Right ventricle myocardium inferior (tissue), 1 donor: ENCODE measurements at regions of chr5 and their contacts with region 1.

Region 1: GRCh38 chr5:55936100-55936693 is 58.6 kb downstream of the IL6ST start:
- DNase-seq: peak; percentile 87
- ATAC-seq: peak; percentile 83

Region 2: GRCh38 chr5:56190497-56190896 is 254.3 kb after region 1 on chr5:
- intact Hi-C with region 1: no loop called
- DNase-seq: no peak
- ATAC-seq: peak; percentile 54

Region 3: GRCh38 chr5:56200856-56201666 is 264.9 kb after region 1 on chr5:
- intact Hi-C with region 1: loop called (anchors 1 kb)
- DNase-seq: no peak
- ATAC-seq: peak; percentile 97

Region 4: GRCh38 chr5:56838409-56839039 is 902.3 kb after region 1 on chr5:
- intact Hi-C with region 1: loop called (anchors 10 kb)
- DNase-seq: no peak
- ATAC-seq: peak; percentile 55